ENCODE measurements at regions of chr4 and their contacts with region 1.

Region 1: DNA sequence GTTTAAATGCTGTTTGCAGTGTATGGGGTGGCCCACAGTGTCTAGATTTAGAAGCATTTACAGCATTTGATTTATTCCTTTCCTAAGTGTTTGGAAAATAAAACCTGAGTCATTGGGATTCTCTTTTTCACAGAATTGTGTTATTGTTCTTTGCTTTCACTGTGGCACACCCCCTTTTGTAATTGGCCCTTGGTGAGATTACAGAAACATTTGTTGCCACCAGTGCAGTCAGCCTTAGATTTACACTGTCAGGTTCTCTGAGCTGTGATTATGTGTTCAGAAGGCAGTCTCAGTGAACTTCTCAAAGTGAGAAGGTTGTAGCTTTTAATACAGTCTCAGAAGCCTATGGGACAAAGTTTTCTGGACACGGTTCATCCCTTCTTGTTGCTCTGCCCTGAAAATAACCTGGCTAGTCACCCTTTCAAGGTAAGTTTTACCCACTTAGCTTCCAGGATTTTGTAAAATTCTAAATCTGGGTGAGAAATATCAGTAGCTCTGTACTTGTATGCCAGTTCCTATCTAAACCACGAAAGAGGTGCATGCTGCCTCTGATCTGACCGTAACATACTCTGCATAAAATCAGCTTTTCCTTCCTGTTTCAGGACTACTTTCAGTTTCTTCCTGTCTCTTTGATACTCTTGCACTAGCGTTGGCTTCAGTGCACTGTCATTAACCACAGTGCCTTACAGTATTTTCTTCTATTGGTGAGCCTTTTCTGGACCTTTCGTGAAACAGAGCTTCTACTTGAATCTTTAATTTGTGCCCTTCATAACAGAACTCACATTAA is 12.6 kb downstream of the RUFY3 start:
- DNase-seq: peak in 7 of 9 donors; percentile 52 to 74 (median 68)
- ATAC-seq: peak; percentile 91
- H3K4me3 ChIP-seq: peak overlapping the region; percentile 52
- H3K4me3 Mint-ChIP-seq: peak overlapping the region; percentile 67 to 92 (median 82)
- H3K27ac ChIP-seq: peak overlapping the region; percentile 73
- H3K27ac Mint-ChIP-seq: peak overlapping the region; percentile 33 to 94 (median 87)
- H3K4me1 ChIP-seq: peaks cover 34 to 42% of the 10 kb centered on the region in 2 donors
- H3K4me1 Mint-ChIP-seq: peaks cover 23 to 57% (median 48%) of the 10 kb centered on the region in 7 donors
- H3K27me3 ChIP-seq: no peaks in the 10 kb centered on the region
- H3K27me3 Mint-ChIP-seq: no peaks in the 10 kb centered on the region

Region 2: GRCh38 chr4:70629469-70630090 is 104.8 kb before region 1 on chr4:
- CTCF ChIA-PET with region 1: no interaction called
- POLR2A ChIA-PET with region 1: no interaction called
- intact Hi-C with region 1: loop called in 1 of 2 experiments (anchors 10 kb)
- DNase-seq: no peak
- ATAC-seq: no peak
- H3K4me3 ChIP-seq: no peak overlapping the region
- H3K4me3 Mint-ChIP-seq: no peak overlapping the region
- H3K27ac ChIP-seq: no peak overlapping the region
- H3K27ac Mint-ChIP-seq: peak overlapping the region in 2 of 9 donors; percentile 8 to 18
- H3K4me1 ChIP-seq: no peaks in the 10 kb centered on the region
- H3K4me1 Mint-ChIP-seq: peaks cover 0 to 6% (median 0%) of the 10 kb centered on the region in 7 donors
- H3K27me3 ChIP-seq: no peaks in the 10 kb centered on the region
- H3K27me3 Mint-ChIP-seq: peaks cover 7 to 22% (median 16%) of the 10 kb centered on the region in 5 donors

Region 3: GRCh38 chr4:70704331-70705145 is 29.8 kb before region 1 on chr4:
- CTCF ChIA-PET with region 1: interaction called, 31 read pairs
- POLR2A ChIA-PET with region 1: interaction called, 131 read pairs
- intact Hi-C with region 1: loop called (anchors 1 kb)
- DNase-seq: peak; percentile 30 to 63 (median 44)
- ATAC-seq: peak; percentile 67
- H3K4me3 ChIP-seq: peak overlapping the region; percentile 87
- H3K4me3 Mint-ChIP-seq: peak overlapping the region; percentile 82 to 95 (median 93)
- H3K27ac ChIP-seq: peak overlapping the region; percentile 88
- H3K27ac Mint-ChIP-seq: peak overlapping the region; percentile 74 to 98 (median 93)
- H3K4me1 ChIP-seq: peaks cover 12 to 18% of the 10 kb centered on the region in 2 donors
- H3K4me1 Mint-ChIP-seq: peaks cover 17 to 43% (median 33%) of the 10 kb centered on the region in 7 donors
- H3K27me3 ChIP-seq: no peaks in the 10 kb centered on the region
- H3K27me3 Mint-ChIP-seq: no peaks in the 10 kb centered on the region

Region 4: DNA sequence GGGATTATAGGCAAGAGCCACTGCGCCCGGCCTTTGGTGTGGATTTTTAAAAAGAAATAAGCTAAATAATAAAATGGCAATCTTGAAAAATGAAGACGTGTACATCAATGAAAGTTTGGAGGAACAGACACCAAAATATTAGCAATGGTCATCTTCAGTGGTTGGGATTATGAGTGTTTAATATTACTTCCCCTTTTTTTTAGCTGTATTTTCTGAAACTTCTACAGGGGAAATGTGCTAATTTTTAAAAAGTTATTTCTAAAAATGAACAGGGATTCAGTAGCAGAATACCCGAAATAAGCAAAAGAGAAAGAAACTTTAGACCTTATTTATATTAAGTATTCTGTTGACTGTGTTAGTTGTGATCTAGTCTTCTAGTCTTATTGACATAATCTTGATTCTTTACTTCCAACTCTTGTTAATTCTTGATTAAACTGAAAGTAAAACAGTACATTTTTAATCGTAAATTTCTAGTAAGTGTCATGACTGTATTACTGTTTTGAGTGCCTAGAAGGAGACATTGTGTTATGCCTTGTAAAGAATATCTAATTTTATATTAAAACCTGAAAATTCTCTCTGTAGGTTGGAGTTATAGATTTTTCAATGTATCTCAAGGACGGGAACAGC is 38.7 kb after region 1 on chr4:
- CTCF ChIA-PET with region 1: interaction called, 3 read pairs
- POLR2A ChIA-PET with region 1: no interaction called
- intact Hi-C with region 1: loop called in 1 of 2 experiments (anchors 5 kb)
- DNase-seq: no peak
- ATAC-seq: no peak
- H3K4me3 ChIP-seq: no peak overlapping the region
- H3K4me3 Mint-ChIP-seq: no peak overlapping the region
- H3K27ac ChIP-seq: no peak overlapping the region
- H3K27ac Mint-ChIP-seq: no peak overlapping the region
- H3K4me1 ChIP-seq: no peaks in the 10 kb centered on the region
- H3K4me1 Mint-ChIP-seq: peaks cover 0 to 16% (median 4%) of the 10 kb centered on the region in 7 donors
- H3K27me3 ChIP-seq: no peaks in the 10 kb centered on the region
- H3K27me3 Mint-ChIP-seq: no peaks in the 10 kb centered on the region

Region 5: DNA sequence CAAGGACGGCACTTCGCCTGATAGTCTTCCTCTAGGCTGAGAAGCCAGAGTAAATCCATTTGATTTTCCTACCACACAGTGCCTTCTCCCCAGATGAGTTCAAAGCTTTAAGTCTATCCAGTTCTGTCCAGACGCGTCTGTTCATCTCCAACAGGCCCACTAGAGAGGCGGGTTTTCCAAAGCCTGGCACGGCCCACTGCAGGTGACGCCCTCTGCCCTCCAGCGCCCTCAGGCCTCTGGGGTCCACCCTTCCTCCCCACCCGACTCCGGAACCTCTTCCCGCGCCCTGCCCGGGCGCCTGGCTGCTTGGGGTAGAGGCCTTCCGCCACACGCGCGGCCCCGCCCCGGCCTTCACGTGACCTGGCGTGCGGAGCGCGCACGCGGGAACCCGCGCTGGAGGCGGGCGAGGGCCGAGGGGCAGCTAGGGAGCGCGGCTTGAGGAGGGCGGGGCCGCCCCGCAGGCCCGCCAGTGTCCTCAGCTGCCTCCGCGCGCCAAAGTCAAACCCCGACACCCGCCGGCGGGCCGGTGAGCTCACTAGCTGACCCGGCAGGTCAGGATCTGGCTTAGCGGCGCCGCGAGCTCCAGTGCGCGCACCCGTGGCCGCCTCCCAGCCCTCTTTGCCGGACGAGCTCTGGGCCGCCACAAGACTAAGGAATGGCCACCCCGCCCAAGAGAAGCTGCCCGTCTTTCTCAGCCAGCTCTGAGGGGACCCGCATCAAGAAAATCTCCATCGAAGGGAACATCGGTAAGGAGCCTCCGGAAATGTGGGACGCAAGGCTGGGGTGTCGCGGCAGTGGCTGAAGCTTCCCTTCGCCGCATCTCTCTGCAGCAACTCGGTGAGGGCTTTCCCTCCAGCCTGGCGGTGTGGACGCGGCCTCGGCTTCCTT is 259.1 kb after region 1 on chr4 and contains the start of gene DCK:
- CTCF ChIA-PET with region 1: interaction called, 5 read pairs
- POLR2A ChIA-PET with region 1: no interaction called
- intact Hi-C with region 1: loop called in 1 of 2 experiments (anchors 5 kb)
- DNase-seq: peak; percentile 77 to 93 (median 80)
- ATAC-seq: peak; percentile 96
- H3K4me3 ChIP-seq: peak within 1 kb of the TSS; percentile 86
- H3K4me3 Mint-ChIP-seq: peak within 1 kb of the TSS; percentile 86 to 98 (median 94)
- H3K27ac ChIP-seq: peak within 1 kb of the TSS; percentile 79
- H3K27ac Mint-ChIP-seq: peak within 1 kb of the TSS; percentile 84 to 97 (median 94)
- H3K4me1 ChIP-seq: peaks cover 19 to 26% of the 10 kb centered on the region in 2 donors
- H3K4me1 Mint-ChIP-seq: peaks cover 31 to 56% (median 45%) of the 10 kb centered on the region in 7 donors
- H3K27me3 ChIP-seq: no peaks in the 10 kb centered on the region
- H3K27me3 Mint-ChIP-seq: no peaks in the 10 kb centered on the region
- total RNA-seq, gene DCK: 19.8 to 72.8 (median 47.7) TPM

Region 6: GRCh38 chr4:71713611-71714203 is 979.3 kb after region 1 on chr4:
- CTCF ChIA-PET with region 1: no interaction called
- POLR2A ChIA-PET with region 1: no interaction called
- intact Hi-C with region 1: loop called in 1 of 2 experiments (anchors 10 kb)
- DNase-seq: peak in 5 of 9 donors; percentile 7 to 33 (median 10)
- ATAC-seq: no peak
- H3K4me3 ChIP-seq: no peak overlapping the region
- H3K4me3 Mint-ChIP-seq: no peak overlapping the region
- H3K27ac ChIP-seq: no peak overlapping the region
- H3K27ac Mint-ChIP-seq: no peak overlapping the region
- H3K4me1 ChIP-seq: no peaks in the 10 kb centered on the region
- H3K4me1 Mint-ChIP-seq: no peaks in the 10 kb centered on the region
- H3K27me3 ChIP-seq: no peaks in the 10 kb centered on the region
- H3K27me3 Mint-ChIP-seq: no peaks in the 10 kb centered on the region

Measured in naive thymus-derived CD4-positive, alpha-beta T cell (primary cell).